Heart right ventricle (tissue), 16 donors: ENCODE measurements at regions of chr9 and their contacts with region 1.

Region 1: DNA sequence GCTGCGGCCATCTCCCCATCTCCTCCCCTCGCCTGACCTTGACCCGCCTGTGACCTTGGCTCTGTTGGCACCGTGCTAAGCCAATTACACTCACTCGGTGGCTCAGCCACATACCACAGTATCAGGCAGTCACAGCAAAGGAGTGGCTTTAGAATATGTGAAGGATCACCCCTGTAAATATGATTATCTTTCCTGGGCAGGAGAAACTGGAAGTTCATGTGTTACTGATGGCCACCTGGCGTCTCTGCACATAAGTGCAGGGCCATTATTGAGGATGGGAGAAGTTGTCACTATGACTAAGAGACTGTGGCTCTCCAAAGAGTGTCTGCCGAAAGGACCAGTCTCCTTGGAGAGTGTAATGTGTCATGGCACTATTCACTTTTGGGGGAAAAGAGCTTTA is 116.9 kb upstream of the S1PR3 start:
- DNase-seq: no peak
- ATAC-seq: peak in 7 of 8 donors; percentile 20 to 61 (median 46)
- H3K4me3 ChIP-seq: no peak overlapping the region
- H3K27ac ChIP-seq: peak overlapping the region in 5 of 10 donors; percentile 40 to 73 (median 57)
- H3K4me1 ChIP-seq: peaks cover 5 to 35% (median 18%) of the 10 kb centered on the region in 9 donors
- H3K27me3 ChIP-seq: no peaks in the 10 kb centered on the region
- CTCF ChIP-seq: peak in 7 of 9 donors; percentile 18 to 48 (median 40)

Region 2: DNA sequence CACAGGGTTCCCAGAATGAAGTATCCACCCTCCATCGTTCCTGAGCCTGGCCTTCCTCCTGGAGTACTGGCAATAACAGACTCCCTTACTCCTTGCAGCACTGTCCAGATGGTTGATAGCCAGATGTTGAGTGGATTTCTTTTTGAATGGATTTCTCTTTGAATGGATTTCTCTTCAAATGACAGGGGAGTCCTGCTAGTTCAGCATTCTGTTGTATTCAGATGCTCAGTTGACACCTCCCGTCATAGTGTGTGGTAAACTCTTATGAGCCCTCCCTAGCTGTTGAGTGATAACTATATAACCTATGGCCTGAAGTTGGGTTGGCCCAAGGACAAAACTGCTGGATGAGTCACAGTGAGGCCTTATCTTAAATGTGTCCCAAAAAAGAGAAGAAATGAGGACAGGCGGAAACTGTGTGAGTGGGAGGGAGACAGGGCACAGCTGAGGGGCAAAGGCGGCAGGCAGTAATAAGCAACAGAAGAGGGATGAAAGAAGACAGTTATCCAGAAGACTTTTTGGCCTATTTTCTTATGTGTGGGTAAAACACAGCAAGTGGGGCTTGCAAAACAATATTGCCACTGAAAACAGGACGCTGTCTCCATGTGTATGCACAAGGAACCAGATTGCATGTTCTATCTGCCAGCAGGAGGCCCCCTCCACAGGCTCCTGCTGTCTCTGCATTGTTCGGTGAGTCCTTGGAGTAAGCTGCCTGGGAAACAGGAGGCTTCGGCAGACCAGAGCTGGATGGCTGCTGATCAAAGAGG is 92.6 kb before region 1 on chr9:
- intact Hi-C with region 1: loop called in 2 of 10 experiments (anchors 10 kb)
- DNase-seq: peak; percentile 33 to 48
- ATAC-seq: peak; percentile 40 to 82 (median 72)
- H3K4me3 ChIP-seq: no peak overlapping the region
- H3K27ac ChIP-seq: peak overlapping the region; percentile 15 to 71 (median 54)
- H3K4me1 ChIP-seq: peaks cover 9 to 50% (median 43%) of the 10 kb centered on the region in 9 donors
- H3K27me3 ChIP-seq: no peaks in the 10 kb centered on the region
- CTCF ChIP-seq: peak; percentile 14 to 70 (median 50)

Region 3: DNA sequence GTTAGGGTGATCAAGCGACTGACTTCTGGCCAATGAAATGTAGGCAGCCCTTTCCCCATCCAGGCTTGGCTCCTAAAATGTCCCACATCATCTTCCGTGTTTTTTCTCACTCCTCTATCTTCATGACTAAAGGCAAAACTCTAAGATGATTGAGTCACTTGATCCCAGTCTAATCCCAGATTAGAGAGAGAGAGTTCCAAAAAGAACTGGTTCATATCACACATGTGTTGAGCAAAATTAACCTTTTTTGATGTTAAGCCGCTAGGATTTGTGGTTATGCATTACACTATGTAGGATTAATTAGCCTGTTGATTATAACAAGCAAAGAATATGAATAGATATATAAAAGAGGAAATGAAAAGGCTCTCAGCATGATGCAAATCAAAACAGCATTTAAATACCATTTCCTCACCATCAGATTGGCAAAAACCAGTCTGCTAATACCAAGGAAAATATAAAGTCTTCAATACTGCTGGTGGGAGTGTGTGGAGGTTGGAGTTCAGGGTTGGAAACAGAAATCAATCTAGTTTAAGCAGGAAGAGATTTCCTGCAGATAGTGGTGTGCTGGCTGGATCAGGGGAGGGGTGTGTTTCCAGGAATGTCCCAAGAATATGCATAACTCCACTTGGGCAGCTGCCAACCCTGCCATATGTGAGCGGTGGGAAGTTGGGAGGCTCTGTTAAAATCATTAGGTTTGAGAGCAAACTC is 70.7 kb before region 1 on chr9:
- intact Hi-C with region 1: loop called in 1 of 10 experiments (anchors 5 kb)
- DNase-seq: no peak
- ATAC-seq: no peak
- H3K4me3 ChIP-seq: no peak overlapping the region
- H3K27ac ChIP-seq: no peak overlapping the region
- H3K4me1 ChIP-seq: peaks cover 0 to 22% (median 8%) of the 10 kb centered on the region in 9 donors
- H3K27me3 ChIP-seq: peaks cover 0 to 39% (median 0%) of the 10 kb centered on the region in 7 donors
- CTCF ChIP-seq: no peak

Region 4: GRCh38 chr9:88818495-88819201 is 55.7 kb before region 1 on chr9:
- intact Hi-C with region 1: no loop called
- DNase-seq: peak in 1 of 2 donors; percentile 36
- ATAC-seq: peak in 2 of 8 donors; percentile 37 to 45
- H3K4me3 ChIP-seq: no peak overlapping the region
- H3K27ac ChIP-seq: peak overlapping the region in 1 of 10 donors; percentile 22
- H3K4me1 ChIP-seq: peaks cover 3 to 46% (median 20%) of the 10 kb centered on the region in 9 donors
- H3K27me3 ChIP-seq: peaks cover 0 to 56% (median 0%) of the 10 kb centered on the region in 7 donors
- CTCF ChIP-seq: no peak

Region 5: GRCh38 chr9:88949425-88949824 is 75.0 kb after region 1 on chr9:
- intact Hi-C with region 1: loop called in 2 of 10 experiments (anchors 5 to 10 kb)
- DNase-seq: peak; percentile 44 to 73
- ATAC-seq: peak; percentile 80 to 96 (median 90)
- H3K4me3 ChIP-seq: no peak overlapping the region
- H3K27ac ChIP-seq: peak overlapping the region in 9 of 10 donors; percentile 42 to 80 (median 61)
- H3K4me1 ChIP-seq: peaks cover 5 to 52% (median 32%) of the 10 kb centered on the region in 9 donors
- H3K27me3 ChIP-seq: no peaks in the 10 kb centered on the region
- CTCF ChIP-seq: no peak